Heart right ventricle (tissue), 16 donors: ENCODE measurements at regions of chr10 and their contacts with region 1.

Region 1: GRCh38 chr10:60456053-60456452 is 66.4 kb upstream of the ANK3 start:
- DNase-seq: no peak
- ATAC-seq: no peak
- H3K4me3 ChIP-seq: no peak overlapping the region
- H3K27ac ChIP-seq: no peak overlapping the region
- H3K4me1 ChIP-seq: peaks cover 0 to 21% (median 13%) of the 10 kb centered on the region in 9 donors
- H3K27me3 ChIP-seq: no peaks in the 10 kb centered on the region
- CTCF ChIP-seq: no peak

Region 2: DNA sequence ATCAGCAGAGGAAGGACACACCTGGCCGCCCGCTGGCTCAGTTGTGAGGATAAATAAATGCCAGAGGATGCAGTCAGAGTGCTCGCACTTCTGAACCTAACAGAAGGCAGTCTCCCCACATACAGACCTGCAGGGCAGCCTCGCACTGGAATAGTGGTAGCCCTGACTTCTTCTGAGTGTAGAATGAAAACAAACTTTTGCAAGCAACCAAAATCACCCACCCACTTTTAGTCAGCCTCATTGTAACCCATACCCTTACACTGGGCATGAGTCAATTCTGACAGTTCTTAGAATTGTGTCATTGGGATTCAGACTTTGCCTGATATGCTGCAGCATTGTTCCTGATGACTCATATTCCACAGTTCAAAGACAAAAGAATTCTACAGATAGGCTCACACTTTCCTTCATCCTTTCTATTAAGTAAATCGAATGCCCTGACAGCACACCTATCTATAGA is 155.3 kb after region 1 on chr10:
- intact Hi-C with region 1: loop called in 1 of 10 experiments (anchors 10 kb)
- DNase-seq: no peak
- ATAC-seq: peak in 2 of 8 donors; percentile 39 to 41
- H3K4me3 ChIP-seq: no peak overlapping the region
- H3K27ac ChIP-seq: no peak overlapping the region
- H3K4me1 ChIP-seq: peaks cover 0 to 7% (median 0%) of the 10 kb centered on the region in 9 donors
- H3K27me3 ChIP-seq: no peaks in the 10 kb centered on the region
- CTCF ChIP-seq: no peak